Breast epithelium (tissue), 4 donors: ENCODE measurements at regions of chr7 and their contacts with region 1.

Region 1: DNA sequence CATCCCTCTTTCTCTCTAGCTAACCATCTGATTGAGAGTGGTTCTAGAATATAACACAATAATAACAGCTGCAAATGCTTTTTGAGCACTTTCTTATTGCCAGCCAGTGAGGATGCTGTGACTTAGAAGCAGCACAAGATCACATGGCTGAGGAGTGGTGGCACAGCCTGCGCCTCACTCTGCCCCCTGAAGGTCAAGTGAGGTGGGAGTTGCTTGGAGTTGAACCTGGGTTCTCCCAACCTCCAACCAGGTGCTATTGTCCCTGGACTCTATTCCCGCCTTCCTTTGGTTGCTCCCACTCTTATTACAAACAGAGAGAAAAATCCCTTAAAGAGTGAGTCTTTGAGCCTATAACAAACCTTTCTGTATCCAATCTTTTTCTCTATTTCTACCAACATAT is 280.3 kb upstream of the PODXL start:
- DNase-seq: no peak
- H3K4me3 ChIP-seq: no peak overlapping the region
- H3K27ac ChIP-seq: no peak overlapping the region
- H3K4me1 ChIP-seq: no peaks in the 10 kb centered on the region
- H3K27me3 ChIP-seq: peaks cover 0 to 12% of the 10 kb centered on the region in 2 donors
- CTCF ChIP-seq: no peak
- POLR2A ChIP-seq: no peak

Region 2: DNA sequence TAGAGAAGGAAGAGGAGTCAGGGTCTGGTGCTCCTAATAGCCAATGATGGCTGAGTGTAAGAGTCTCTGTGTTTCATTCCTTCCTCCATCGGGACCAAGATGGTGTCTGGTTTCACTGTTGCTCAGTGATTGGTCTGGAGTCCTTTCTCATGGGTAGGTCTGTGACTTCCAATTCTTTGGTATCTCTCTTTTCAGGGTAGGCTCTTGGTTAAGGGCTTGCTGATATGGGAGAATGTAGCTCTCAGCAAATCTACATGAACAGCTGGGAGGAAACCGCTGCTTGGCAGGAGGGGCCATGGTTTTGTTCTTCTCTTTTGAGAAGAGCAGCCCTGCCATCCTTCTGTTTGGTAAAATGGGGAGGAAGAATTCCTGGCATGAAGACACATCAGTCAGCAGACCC is 71.2 kb before region 1 on chr7:
- intact Hi-C with region 1: no loop called
- DNase-seq: no peak
- H3K4me3 ChIP-seq: no peak overlapping the region
- H3K27ac ChIP-seq: no peak overlapping the region
- H3K4me1 ChIP-seq: no peaks in the 10 kb centered on the region
- H3K27me3 ChIP-seq: peaks cover 0 to 25% of the 10 kb centered on the region in 2 donors
- CTCF ChIP-seq: no peak
- POLR2A ChIP-seq: no peak

Region 3: GRCh38 chr7:131909151-131909768 is 72.5 kb after region 1 on chr7:
- intact Hi-C with region 1: loop called (anchors 2 kb)
- DNase-seq: no peak
- H3K4me3 ChIP-seq: peak overlapping the region; percentile 20 to 52 (median 36)
- H3K27ac ChIP-seq: no peak overlapping the region
- H3K4me1 ChIP-seq: no peaks in the 10 kb centered on the region
- H3K27me3 ChIP-seq: peaks cover 0 to 47% of the 10 kb centered on the region in 2 donors
- CTCF ChIP-seq: no peak
- POLR2A ChIP-seq: no peak